Stomach (tissue), 19 donors: ENCODE measurements at regions of chr7 and their contacts with region 1.

Region 1: DNA sequence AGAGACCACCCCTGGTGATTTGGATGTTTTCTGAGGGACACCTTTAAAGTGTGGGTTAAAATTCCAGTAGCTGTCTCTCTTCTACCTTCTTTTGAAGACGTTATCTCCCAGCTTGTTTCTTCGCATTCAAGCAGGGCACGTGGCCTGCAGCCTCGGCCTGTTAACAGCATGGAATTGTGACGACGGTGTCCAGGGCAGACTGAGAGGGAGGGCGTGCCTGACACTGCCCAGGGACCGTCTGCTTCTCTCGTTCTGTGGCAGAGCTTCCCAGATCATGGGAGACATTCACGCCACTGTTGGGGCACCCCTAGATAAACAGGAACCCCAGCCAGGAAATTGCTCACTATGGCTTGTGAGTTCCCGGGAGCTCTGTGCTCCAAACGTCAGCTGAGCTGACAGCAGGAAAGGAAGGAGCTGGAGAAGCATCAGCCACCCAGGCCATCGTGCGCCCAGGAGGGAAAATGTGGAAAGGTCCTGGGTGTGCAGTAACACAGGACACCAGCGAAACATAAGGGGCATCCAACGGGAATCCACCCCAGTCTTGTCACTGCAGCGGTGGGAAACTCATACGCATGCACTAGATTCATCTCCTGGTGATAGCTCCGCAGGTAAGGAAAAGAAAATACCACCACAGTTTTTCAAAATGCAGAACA is 41.1 kb upstream of the RBM33 start:
- DNase-seq: no peak
- H3K4me3 ChIP-seq: no peak overlapping the region
- H3K27ac ChIP-seq: no peak overlapping the region
- H3K4me1 ChIP-seq: peaks cover 0 to 8% (median 5%) of the 10 kb centered on the region in 4 donors
- H3K27me3 ChIP-seq: peaks cover 0 to 31% (median 0%) of the 10 kb centered on the region in 3 donors
- CTCF ChIP-seq: no peak
- EP300 ChIP-seq: no peak
- POLR2A ChIP-seq: no peak

Region 2: GRCh38 chr7:155738652-155739537 is 135.6 kb after region 1 on chr7:
- intact Hi-C with region 1: loop called (anchors 10 kb)
- DNase-seq: peak; percentile 82 to 91
- H3K4me3 ChIP-seq: no peak overlapping the region
- H3K27ac ChIP-seq: no peak overlapping the region
- H3K4me1 ChIP-seq: peaks cover 0 to 15% (median 7%) of the 10 kb centered on the region in 4 donors
- H3K27me3 ChIP-seq: no peaks in the 10 kb centered on the region
- CTCF ChIP-seq: peak in 5 of 7 experiments; percentile 24 to 73 (median 41)
- EP300 ChIP-seq: no peak
- POLR2A ChIP-seq: no peak

Region 3: DNA sequence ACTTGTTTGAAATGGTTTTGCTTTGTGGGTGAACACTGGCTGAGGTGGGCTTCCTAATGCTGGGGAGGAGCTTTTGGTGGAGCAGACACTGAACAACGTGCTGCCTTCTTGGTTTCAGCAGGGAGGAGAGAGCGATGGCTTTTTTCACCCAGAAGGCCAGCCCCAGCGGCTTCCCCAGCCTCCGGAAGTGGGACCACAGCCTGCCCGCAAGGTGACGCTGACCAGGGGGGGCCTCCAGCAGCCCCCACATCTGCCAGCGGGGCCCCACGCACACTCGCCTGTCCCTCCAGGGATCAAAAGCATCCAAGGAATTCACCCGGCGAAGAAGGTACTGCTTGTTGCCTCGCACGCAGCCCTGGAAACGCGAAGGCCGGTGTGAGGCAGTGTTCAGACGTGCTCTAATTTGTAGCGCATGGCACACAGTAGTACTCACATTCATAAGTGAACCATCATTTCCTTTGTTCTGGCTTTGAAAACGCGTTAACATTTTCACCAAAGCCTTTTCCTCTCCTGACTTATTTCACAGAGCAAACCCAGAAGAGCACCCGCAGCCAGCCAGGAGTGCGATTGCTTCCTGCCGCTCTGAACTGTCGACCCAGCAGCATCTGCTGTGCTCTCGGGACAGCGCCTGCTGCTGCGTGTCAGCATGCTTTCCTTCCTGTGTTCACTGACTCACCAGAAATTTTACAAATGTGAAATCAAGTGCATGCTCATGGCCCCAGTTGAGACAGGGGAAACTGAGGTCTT is 160.5 kb after region 1 on chr7:
- intact Hi-C with region 1: loop called (anchors 10 kb)
- DNase-seq: peak in 1 of 2 donors; percentile 72
- H3K4me3 ChIP-seq: no peak overlapping the region
- H3K27ac ChIP-seq: peak overlapping the region in 4 of 5 donors; percentile 19 to 58 (median 52)
- H3K4me1 ChIP-seq: peaks cover 12 to 36% (median 24%) of the 10 kb centered on the region in 4 donors
- H3K27me3 ChIP-seq: no peaks in the 10 kb centered on the region
- CTCF ChIP-seq: no peak
- EP300 ChIP-seq: no peak
- POLR2A ChIP-seq: no peak